AG04449 (cell line): ENCODE measurements at regions of chr17 and their contacts with region 1.

Region 1: DNA sequence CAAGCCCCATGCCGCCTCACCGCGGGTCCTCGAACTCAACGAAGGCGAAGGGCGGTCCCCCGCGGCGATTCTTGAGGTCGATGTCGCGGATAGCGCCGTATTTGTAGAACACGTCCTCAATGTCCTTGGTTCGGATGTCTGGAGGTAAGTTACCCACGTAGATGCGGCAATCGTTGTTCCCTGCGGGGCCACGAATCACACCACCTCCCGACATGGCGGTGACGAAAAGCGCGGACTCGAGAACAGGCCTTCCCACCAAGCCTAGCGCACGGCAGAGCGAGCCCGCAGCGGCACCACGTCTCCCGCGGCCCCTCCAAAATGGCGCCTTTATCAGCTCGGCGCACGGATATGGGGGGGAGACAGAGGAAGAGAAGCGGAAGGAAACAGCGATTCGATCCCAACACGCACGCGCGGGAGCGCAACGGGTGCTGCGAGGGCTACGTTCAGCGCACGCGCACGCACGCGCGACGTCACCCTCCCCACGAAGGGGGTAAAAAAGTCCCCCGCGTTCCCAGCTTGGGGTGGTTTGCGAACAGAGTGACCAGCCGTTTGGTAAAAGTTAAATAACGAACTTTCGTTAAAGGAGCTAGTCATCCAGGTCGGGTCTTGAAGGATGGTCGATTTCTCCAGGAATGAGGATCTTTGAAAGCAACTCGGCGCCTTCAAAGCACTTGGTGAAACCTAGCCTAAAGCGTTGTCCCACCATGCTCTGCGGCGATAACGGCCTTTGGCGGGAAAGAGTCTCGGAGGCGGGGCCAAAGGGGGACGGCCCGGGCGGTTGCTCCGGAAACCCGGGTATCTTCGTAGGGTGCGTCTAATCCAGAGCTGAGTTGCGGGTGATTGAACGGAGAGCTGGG is at the start of gene SRSF1:
- DNase-seq: peak; percentile 75
- H3K4me3 ChIP-seq: peak within 1 kb of the TSS; percentile 95
- CTCF ChIP-seq: no peak

Region 2: GRCh38 chr17:57849874-57850754 is 157.0 kb before region 1 on chr17 and contains the start of gene MRPS23:
- CTCF ChIA-PET with region 1: interaction called, 1,361 read pairs
- POLR2A ChIA-PET with region 1: interaction called, 16 read pairs
- DNase-seq: peak; percentile 95
- H3K4me3 ChIP-seq: peak within 1 kb of the TSS; percentile 99
- CTCF ChIP-seq: no peak

Region 3: DNA sequence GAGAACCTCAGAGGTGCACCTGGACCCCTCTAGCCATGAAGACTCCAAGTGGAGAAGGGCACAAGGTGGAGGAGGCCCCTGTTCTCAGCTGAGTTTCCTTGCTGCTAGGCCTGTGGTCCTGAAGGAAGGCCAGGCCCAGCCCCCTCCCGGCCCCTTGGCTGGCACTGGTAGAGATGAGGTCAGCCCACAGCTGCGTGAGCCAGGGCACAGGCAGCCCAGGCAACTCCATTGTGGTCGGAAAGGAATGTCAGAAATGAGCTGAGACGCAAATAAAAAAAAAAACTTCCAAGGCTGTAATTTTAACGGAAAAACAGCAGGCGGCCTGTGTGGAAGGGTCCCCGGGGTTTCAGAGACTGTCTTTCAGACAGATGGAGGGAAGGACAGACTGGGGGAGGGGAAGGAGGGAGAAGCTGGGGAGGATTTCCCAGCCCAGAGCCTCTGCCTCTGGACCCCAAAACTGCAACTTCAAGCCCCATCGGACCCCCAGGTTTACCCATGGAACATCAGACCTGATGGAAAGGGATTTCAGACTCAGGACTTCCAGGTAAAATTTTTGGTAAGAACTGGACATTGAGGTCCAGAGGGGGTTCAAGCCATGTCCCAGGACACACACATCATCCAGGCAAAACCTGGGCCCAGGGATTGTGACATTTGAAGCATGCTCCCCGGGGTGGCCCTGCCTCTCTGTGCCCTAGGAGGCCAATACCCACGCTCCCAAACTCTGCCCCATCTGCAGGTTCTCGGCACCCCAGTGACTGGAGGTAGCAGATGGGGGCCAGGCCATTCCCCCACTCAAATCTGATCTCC is 131.6 kb before region 1 on chr17:
- CTCF ChIA-PET with region 1: interaction called, 1,361 read pairs
- POLR2A ChIA-PET with region 1: interaction called, 13 read pairs
- DNase-seq: peak; percentile 94
- H3K4me3 ChIP-seq: peak overlapping the region; percentile 31
- CTCF ChIP-seq: peak; percentile 60

Region 4: DNA sequence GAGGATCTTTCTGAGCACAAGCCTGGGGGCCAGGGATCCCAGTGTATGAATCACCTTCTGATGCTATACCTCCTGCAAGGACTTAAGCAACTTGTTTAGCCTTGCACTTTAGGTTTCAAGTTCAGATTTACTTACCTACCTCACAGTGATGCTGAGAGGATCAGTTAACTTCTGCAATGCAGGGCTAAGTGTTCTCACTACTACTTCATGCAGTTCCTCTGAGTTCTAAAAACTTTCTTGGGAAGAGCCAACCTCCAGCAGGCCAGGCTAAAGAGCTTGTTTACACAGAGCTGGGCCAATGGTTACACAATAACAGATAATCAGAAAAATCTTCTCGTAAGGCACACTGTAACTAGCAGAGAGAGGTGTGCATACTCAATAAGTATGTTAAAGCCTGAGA is 32.1 kb before region 1 on chr17:
- CTCF ChIA-PET with region 1: no interaction called
- POLR2A ChIA-PET with region 1: no interaction called
- DNase-seq: no peak
- H3K4me3 ChIP-seq: no peak overlapping the region
- CTCF ChIP-seq: no peak

Region 5: GRCh38 chr17:57995076-57995956 is 11.8 kb before region 1 on chr17:
- CTCF ChIA-PET with region 1: interaction called, 88 read pairs
- POLR2A ChIA-PET with region 1: interaction called, 9 read pairs
- DNase-seq: no peak
- H3K4me3 ChIP-seq: no peak overlapping the region
- CTCF ChIP-seq: peak; percentile 70

Region 6: GRCh38 chr17:58112970-58113631 is 105.9 kb after region 1 on chr17:
- CTCF ChIA-PET with region 1: interaction called, 14 read pairs
- POLR2A ChIA-PET with region 1: no interaction called
- DNase-seq: no peak
- H3K4me3 ChIP-seq: no peak overlapping the region
- CTCF ChIP-seq: peak; percentile 89